GM18951 (cell line): ENCODE measurements at regions of chr14 and their contacts with region 1.

Region 1: DNA sequence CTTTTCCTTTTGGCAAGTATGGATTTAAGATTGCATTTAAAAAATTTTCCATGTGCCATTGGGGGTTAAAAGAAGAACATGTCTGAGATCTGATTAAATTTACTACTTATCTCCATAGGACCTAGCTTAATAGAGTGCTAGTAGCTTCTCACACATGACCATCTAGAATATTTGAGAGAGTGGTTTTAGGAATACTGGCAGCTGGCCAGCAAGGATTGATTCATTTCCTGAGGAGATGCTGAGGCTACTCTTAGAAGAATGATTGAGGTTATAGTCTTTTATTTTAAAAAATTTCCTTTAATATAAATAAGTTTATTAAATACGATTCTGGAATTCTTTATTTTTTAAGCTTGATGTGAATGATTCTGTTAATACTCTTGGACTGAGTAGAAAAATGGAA is 56.2 kb downstream of the MIPOL1 start:
- POLR2A ChIP-seq: no peak

Region 2: DNA sequence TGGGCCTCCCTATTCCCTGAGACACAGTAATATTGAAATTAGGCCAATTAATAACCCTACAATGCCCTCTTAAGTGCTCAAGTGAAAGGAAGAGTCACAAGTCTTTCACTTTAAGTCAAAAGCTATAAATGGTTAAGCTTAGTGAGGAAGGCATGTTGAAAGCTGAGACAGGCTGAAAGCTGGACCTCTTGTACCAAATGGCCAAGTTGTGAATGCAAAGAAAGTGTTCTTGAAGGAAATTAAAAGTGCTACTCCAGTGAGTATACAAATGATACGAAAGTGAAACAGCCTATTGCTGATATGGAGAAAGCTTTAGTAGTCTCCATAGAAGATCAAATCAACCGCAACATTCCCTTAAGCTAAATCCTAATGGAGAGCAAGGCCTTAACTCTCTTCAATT is 1218.2 kb before region 1 on chr14:
- in situ Hi-C with region 1: no loop called
- POLR2A ChIP-seq: no peak

Region 3: GRCh38 chr14:37187294-37187693 is 66.6 kb before region 1 on chr14:
- in situ Hi-C with region 1: no loop called
- POLR2A ChIP-seq: no peak

Region 4: DNA sequence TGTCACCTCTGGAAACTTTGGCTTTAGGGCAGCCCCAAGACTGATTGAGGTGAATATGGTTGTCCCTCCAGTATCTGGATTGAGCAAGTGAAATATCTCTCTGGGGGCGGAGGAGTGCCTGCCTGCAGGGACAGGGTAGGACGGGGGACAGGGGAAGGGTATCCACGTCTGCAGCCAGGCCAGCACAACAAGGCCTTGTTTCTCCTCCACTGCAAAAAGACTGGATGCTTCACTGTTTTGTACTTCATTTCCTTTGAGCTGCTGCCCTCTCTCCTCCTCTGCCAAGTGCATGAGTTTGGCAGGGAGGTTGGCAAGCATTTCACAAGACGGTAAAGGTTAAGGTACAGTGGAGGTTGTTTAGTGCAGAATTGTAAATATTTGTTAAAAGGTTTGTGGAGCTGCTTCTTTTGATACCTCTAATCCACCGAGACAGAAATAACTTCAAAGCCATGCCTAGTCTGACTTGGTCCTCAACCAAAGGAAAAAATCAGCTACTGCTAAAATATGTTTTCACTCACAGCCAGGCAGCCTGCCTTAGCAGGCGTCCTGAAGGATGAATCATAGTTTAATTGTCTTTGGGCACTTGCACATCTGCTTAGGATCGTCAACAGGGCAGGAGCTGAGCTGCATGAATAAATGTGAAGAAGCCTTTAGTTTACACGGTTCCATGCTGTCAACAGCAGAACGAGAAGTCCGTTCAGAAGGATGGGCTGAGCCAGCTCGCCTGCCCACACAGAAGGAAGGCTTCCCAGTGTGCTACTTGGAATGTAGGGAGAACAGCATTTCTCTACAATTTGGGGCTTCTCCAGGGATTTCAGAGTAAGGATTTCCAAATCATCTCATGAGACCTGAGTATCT is 611.2 kb after region 1 on chr14:
- in situ Hi-C with region 1: loop called (anchors 10 kb)
- POLR2A ChIP-seq: no peak

Region 5: GRCh38 chr14:37924622-37925021 is 670.7 kb after region 1 on chr14:
- in situ Hi-C with region 1: no loop called
- POLR2A ChIP-seq: no peak